Ascending aorta (tissue), 2 donors: ENCODE measurements at regions of chr14 and their contacts with region 1.

Region 1: GRCh38 chr14:77007975-77008421 is 20.5 kb downstream of the IRF2BPL start:
- DNase-seq: peak; percentile 47 to 91
- H3K4me3 ChIP-seq: no peak overlapping the region
- H3K27ac ChIP-seq: peak overlapping the region; percentile 69 to 80
- H3K4me1 ChIP-seq: peaks cover 18 to 37% of the 10 kb centered on the region in 2 donors
- H3K27me3 ChIP-seq: no peaks in the 10 kb centered on the region
- CTCF ChIP-seq: no peak

Region 2: GRCh38 chr14:76672123-76672522 is 335.9 kb before region 1 on chr14:
- intact Hi-C with region 1: no loop called
- DNase-seq: no peak
- H3K4me3 ChIP-seq: no peak overlapping the region
- H3K27ac ChIP-seq: no peak overlapping the region
- H3K4me1 ChIP-seq: no peaks in the 10 kb centered on the region
- H3K27me3 ChIP-seq: no peaks in the 10 kb centered on the region
- CTCF ChIP-seq: no peak

Region 3: DNA sequence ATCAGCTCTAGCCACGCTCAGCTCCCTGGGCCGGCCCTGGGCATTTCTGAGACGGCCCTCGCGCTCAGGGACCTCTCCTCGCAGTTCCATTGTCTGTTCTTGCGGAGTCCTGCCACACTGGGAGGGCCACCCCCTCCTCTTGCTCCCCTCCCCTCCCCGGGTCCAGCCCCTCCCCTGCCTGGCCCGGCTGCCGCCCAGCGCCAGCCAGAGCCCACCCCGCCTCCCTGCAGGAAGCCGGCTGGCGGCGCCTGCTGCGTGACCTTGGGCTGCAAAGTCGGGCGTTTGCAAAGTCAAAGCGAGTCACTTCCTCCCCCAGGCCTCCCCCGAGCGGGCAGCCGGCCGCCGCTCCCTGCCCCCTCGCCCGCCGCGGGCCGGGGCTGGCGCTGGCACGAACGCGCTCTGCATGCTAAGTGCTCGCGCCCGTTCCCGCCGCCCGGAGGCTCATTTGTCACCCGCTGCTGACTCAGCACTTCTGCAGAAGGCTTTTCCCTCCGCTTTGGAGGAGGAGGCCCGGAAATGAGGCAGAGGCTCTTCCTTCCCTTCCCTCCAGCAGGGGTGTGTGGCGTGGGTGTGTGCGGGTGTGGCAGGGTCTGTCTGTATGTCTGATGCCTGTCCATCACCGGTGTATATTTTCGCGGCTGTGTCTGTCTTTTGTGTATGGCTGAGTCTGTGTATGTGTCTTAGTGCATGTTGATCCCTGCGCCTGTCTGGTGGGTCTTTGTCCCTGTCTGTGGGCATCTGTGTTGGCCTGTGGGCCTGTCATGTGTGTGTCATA is 51.5 kb before region 1 on chr14:
- intact Hi-C with region 1: loop called (anchors 5 kb)
- DNase-seq: peak; percentile 82 to 97
- H3K4me3 ChIP-seq: peak overlapping the region; percentile 45 to 59
- H3K27ac ChIP-seq: peak overlapping the region; percentile 94 to 97
- H3K4me1 ChIP-seq: peaks cover 12 to 56% of the 10 kb centered on the region in 2 donors
- H3K27me3 ChIP-seq: no peaks in the 10 kb centered on the region
- CTCF ChIP-seq: no peak

Region 4: GRCh38 chr14:77053046-77053841 is 45.2 kb after region 1 on chr14:
- intact Hi-C with region 1: loop called (anchors 5 kb)
- DNase-seq: peak in 1 of 2 donors; percentile 84
- H3K4me3 ChIP-seq: no peak overlapping the region
- H3K27ac ChIP-seq: peak overlapping the region; percentile 72 to 79
- H3K4me1 ChIP-seq: peaks cover 0 to 17% of the 10 kb centered on the region in 2 donors
- H3K27me3 ChIP-seq: no peaks in the 10 kb centered on the region
- CTCF ChIP-seq: peak; percentile 83 to 93 (median 89)